ENCODE measurements at regions of chr22 and their contacts with region 1.

Region 1: GRCh38 chr22:49305214-49305909 is 522.3 kb downstream of the BRD1 start:
- DNase-seq: peak; percentile 53
- H3K4me3 ChIP-seq: no peak overlapping the region
- H3K27ac ChIP-seq: no peak overlapping the region
- H3K4me1 ChIP-seq: peaks cover 3% of the 10 kb centered on the region
- H3K27me3 ChIP-seq: peaks cover 92% of the 10 kb centered on the region
- CTCF ChIP-seq: peak; percentile 94

Region 2: GRCh38 chr22:49046546-49047361 is 258.6 kb before region 1 on chr22:
- intact Hi-C with region 1: loop called (anchors 5 kb)
- DNase-seq: no peak
- H3K4me3 ChIP-seq: no peak overlapping the region
- H3K27ac ChIP-seq: no peak overlapping the region
- H3K4me1 ChIP-seq: no peaks in the 10 kb centered on the region
- H3K27me3 ChIP-seq: peaks cover 88% of the 10 kb centered on the region
- CTCF ChIP-seq: peak; percentile 54

Region 3: GRCh38 chr22:49132009-49132408 is 173.4 kb before region 1 on chr22:
- intact Hi-C with region 1: no loop called
- DNase-seq: no peak
- H3K4me3 ChIP-seq: no peak overlapping the region
- H3K27ac ChIP-seq: no peak overlapping the region
- H3K4me1 ChIP-seq: no peaks in the 10 kb centered on the region
- H3K27me3 ChIP-seq: peaks cover 85% of the 10 kb centered on the region
- CTCF ChIP-seq: no peak

Measured in left ventricle myocardium inferior (tissue), 1 donor.